ENCODE measurements at regions of chr1 and their contacts with region 1.

Region 1: GRCh38 chr1:88180449-88181108 is 503.5 kb upstream of the PKN2 start:
- H3K4me3 Mint-ChIP-seq: no peak overlapping the region
- H3K27ac Mint-ChIP-seq: no peak overlapping the region
- H3K4me1 Mint-ChIP-seq: no peaks in the 10 kb centered on the region
- H3K27me3 Mint-ChIP-seq: peaks cover 3% of the 10 kb centered on the region

Region 2: GRCh38 chr1:88079036-88079435 is 101.5 kb before region 1 on chr1:
- intact Hi-C with region 1: no loop called
- H3K4me3 Mint-ChIP-seq: no peak overlapping the region
- H3K27ac Mint-ChIP-seq: no peak overlapping the region
- H3K4me1 Mint-ChIP-seq: peaks cover 6% of the 10 kb centered on the region
- H3K27me3 Mint-ChIP-seq: no peaks in the 10 kb centered on the region

Region 3: DNA sequence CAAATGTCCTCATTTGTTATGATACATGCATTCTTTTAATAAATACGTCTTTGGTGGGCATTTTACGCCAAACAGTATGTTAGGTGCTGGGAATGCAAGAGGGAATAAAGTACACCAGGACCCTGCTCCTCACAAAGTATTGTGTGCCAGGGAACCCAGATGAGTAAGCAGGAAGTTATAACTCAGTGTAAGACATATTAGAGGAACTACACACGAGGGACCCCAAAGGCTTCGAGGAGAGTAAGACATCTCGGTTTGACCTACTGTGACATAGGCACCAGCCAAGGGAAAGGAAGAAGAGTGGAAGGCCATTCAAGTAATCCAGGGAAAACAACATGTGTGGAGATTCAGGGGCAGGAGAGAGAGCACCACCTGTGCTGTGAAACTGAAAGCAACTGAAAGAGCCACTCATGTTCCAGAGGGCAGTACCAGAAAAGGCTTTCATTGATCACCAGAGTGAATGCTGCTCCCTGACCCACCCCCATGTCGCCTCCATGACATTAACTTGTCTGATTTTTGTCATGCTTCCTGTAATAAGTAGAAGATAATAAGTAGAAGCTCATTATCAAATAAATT is 39.0 kb before region 1 on chr1:
- intact Hi-C with region 1: no loop called
- H3K4me3 Mint-ChIP-seq: peak overlapping the region; percentile 61
- H3K27ac Mint-ChIP-seq: no peak overlapping the region
- H3K4me1 Mint-ChIP-seq: peaks cover 5% of the 10 kb centered on the region
- H3K27me3 Mint-ChIP-seq: no peaks in the 10 kb centered on the region

Region 4: DNA sequence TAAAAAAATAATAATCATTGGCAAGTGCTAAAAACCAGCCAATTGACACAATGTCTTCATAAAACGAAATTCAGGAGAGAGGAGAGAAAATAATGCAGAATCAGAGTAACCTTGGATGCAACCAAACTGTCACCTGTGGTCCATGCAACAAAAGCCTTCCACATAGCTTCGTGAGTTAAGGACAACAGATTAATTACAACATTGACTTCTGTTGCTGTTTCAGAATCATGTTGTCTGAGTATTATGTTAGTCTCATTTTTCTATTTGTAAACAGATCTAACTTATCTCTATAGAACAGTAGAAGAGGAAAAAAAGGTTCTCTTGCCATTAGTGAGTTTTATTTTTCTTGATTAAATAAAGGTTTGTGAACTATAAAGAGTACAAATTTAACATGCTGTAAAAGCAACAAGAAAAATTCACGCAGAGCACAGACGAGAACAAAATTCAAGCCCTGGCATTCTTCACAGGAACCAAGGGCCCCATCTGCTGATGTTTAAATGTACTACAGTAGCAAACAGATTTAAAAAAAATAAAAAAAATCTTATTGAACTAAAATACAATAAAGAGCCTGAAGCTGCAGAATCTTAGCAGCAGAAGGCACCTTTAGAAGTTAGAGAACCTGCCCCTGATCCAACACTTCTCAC is 122.4 kb after region 1 on chr1:
- intact Hi-C with region 1: loop called (anchors 5 kb)
- H3K4me3 Mint-ChIP-seq: no peak overlapping the region
- H3K27ac Mint-ChIP-seq: no peak overlapping the region
- H3K4me1 Mint-ChIP-seq: no peaks in the 10 kb centered on the region
- H3K27me3 Mint-ChIP-seq: no peaks in the 10 kb centered on the region

Region 5: GRCh38 chr1:88378566-88378965 is 198.0 kb after region 1 on chr1:
- intact Hi-C with region 1: no loop called
- H3K4me3 Mint-ChIP-seq: no peak overlapping the region
- H3K27ac Mint-ChIP-seq: no peak overlapping the region
- H3K4me1 Mint-ChIP-seq: no peaks in the 10 kb centered on the region
- H3K27me3 Mint-ChIP-seq: no peaks in the 10 kb centered on the region

Region 6: DNA sequence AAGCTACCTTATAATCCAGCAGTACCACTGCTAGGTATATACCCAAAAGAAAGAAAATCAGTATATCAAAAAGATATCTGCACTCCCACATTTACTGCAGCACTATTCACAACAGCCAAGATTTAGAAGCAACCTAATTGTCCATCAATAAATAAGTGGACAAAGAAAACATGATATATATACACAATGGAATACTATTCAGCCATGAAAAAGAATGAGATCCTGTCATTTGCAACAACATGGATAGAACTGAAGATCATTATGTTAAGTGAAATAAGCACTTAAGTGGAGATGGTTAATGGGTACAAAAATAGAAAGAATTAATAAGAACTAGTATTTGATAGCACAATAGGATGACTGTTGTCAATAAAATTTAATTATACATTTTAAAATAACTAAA is 412.8 kb after region 1 on chr1:
- intact Hi-C with region 1: loop called (anchors 5 kb)
- H3K4me3 Mint-ChIP-seq: no peak overlapping the region
- H3K27ac Mint-ChIP-seq: no peak overlapping the region
- H3K4me1 Mint-ChIP-seq: no peaks in the 10 kb centered on the region
- H3K27me3 Mint-ChIP-seq: no peaks in the 10 kb centered on the region

Measured in dendritic cell treated with granulocyte-macrophage colony-stimulating factor and Interleukin-4, amounts not matched to agents 40 ng/mL and 50 ng/mL, for 4 days (primary cell).